Endothelial cell of umbilical vein (primary cell): ENCODE measurements at regions of chr16 and their contacts with region 1.

Region 1: GRCh38 chr16:87853411-87854052 is 15.8 kb downstream of the SLC7A5 start:
- DNase-seq: peak; percentile 83
- H3K4me3 ChIP-seq: peak overlapping the region in 2 of 3 experiments; percentile 24 to 49
- H3K27ac ChIP-seq: peak overlapping the region; percentile 61
- H3K4me1 ChIP-seq: peaks cover 4% of the 10 kb centered on the region
- H3K27me3 ChIP-seq: no peaks in the 10 kb centered on the region
- CTCF ChIP-seq: no peak
- POLR2A ChIP-seq: no peak

Region 2: DNA sequence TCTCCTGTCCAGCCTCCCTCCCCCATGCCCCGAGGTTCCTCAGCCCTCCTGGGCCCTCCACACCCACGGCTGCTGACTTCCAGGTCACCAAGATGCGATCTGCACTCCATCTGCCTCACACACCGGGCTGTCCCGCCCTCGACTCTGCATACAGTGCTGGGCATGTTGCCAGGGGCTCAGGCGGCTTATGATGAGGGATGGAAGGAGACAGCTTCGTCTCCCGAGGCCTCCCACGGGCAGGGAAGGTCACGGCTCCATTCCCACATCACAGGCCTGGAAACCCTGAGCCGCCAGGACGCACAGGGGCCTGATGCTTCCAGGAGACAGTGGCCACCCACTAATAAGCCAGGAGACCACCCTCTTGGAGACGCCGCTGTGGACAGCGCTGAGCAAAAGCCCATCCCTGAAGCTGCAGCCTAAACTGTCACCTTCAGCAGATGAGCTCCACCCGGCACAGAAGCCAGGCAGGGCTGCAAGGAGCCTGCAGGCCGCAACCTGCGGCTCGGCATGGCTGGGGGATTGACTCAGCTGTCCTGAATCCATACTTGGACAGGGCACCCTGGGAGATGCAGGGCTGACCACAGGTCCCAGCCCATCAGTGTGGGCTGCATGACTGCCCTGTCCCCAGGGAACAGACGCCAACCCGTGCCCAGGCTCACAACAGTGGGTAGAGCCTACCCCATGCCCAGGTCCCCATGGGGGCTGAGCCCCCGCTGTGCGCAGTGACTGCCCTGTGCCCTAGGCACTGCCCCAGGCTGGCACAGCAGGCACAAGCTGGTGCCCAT is 18.7 kb before region 1 on chr16:
- CTCF ChIA-PET with region 1: interaction called, 53 read pairs
- POLR2A ChIA-PET with region 1: interaction called, 3 read pairs
- dilution Hi-C with region 1: no loop called
- intact Hi-C with region 1: loop called (anchors 1 kb)
- DNase-seq: no peak
- H3K4me3 ChIP-seq: no peak overlapping the region
- H3K27ac ChIP-seq: no peak overlapping the region
- H3K4me1 ChIP-seq: peaks cover 24% of the 10 kb centered on the region
- H3K27me3 ChIP-seq: no peaks in the 10 kb centered on the region
- CTCF ChIP-seq: no peak
- POLR2A ChIP-seq: no peak